ENCODE measurements at regions of chr4 and their contacts with region 1.

Region 1: GRCh38 chr4:40840985-40841571 is 91.3 kb downstream of the NSUN7 start:
- DNase-seq: peak; percentile 38
- H3K4me3 ChIP-seq: no peak overlapping the region
- CTCF ChIP-seq: peak; percentile 84

Region 2: GRCh38 chr4:40744218-40744617 is 96.9 kb before region 1 on chr4:
- in situ Hi-C with region 1: loop called (anchors 5 kb)
- DNase-seq: no peak
- H3K4me3 ChIP-seq: no peak overlapping the region
- CTCF ChIP-seq: no peak

Region 3: DNA sequence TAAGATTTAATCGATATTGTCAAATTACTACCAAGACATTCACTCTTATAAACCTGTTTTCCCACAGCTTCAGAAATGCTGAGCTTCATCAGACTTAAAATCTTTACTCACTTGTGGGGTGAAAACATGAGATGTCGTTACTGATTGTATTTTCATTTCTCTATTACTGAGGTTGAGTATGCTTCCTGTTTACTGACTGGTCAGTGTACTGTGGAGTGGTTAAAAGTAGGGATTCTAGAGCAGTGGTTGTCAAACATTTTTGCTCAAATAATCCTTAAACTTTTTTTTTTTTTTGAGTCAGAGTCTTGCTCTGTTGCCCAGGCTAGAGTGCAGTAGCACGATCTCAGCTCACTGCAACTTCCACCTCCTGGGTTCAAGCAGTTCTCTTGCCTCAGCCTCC is 41.0 kb before region 1 on chr4:
- in situ Hi-C with region 1: loop called (anchors 5 kb)
- DNase-seq: no peak
- H3K4me3 ChIP-seq: no peak overlapping the region
- CTCF ChIP-seq: no peak